Activated B cell treated with CpG ODN at 0.5 μM for 24 hours (primary cell): ENCODE measurements at regions of chr2 and their contacts with region 1.

Region 1: GRCh38 chr2:101151141-101151858 is at the start of gene TBC1D8:
- DNase-seq: peak; percentile 59
- ATAC-seq: peak; percentile 86
- H3K4me3 Mint-ChIP-seq: peak within 1 kb of the TSS; percentile 86
- H3K27ac Mint-ChIP-seq: no peak within 1 kb of the TSS
- H3K4me1 Mint-ChIP-seq: peaks cover 32% of the 10 kb centered on the region
- H3K27me3 Mint-ChIP-seq: peaks cover 31% of the 10 kb centered on the region
- CTCF ChIP-seq: no peak
- total RNA-seq, gene TBC1D8: 3.5 and 4.7 TPM in 2 replicates

Region 2: GRCh38 chr2:100610381-100610831 is 540.9 kb before region 1 on chr2:
- CTCF ChIA-PET with region 1: interaction called, 4 read pairs
- POLR2A ChIA-PET with region 1: no interaction called
- intact Hi-C with region 1: loop called (anchors 2 kb)
- DNase-seq: peak; percentile 25
- ATAC-seq: peak; percentile 58
- H3K4me3 Mint-ChIP-seq: no peak overlapping the region
- H3K27ac Mint-ChIP-seq: no peak overlapping the region
- H3K4me1 Mint-ChIP-seq: peaks cover 2% of the 10 kb centered on the region
- H3K27me3 Mint-ChIP-seq: peaks cover 24% of the 10 kb centered on the region
- CTCF ChIP-seq: no peak

Region 3: GRCh38 chr2:100818606-100819369 is 332.5 kb before region 1 on chr2:
- CTCF ChIA-PET with region 1: no interaction called
- POLR2A ChIA-PET with region 1: no interaction called
- intact Hi-C with region 1: no loop called
- DNase-seq: no peak
- ATAC-seq: no peak
- H3K4me3 Mint-ChIP-seq: no peak overlapping the region
- H3K27ac Mint-ChIP-seq: no peak overlapping the region
- H3K4me1 Mint-ChIP-seq: peaks cover 3% of the 10 kb centered on the region
- H3K27me3 Mint-ChIP-seq: peaks cover 58% of the 10 kb centered on the region
- CTCF ChIP-seq: no peak

Region 4: DNA sequence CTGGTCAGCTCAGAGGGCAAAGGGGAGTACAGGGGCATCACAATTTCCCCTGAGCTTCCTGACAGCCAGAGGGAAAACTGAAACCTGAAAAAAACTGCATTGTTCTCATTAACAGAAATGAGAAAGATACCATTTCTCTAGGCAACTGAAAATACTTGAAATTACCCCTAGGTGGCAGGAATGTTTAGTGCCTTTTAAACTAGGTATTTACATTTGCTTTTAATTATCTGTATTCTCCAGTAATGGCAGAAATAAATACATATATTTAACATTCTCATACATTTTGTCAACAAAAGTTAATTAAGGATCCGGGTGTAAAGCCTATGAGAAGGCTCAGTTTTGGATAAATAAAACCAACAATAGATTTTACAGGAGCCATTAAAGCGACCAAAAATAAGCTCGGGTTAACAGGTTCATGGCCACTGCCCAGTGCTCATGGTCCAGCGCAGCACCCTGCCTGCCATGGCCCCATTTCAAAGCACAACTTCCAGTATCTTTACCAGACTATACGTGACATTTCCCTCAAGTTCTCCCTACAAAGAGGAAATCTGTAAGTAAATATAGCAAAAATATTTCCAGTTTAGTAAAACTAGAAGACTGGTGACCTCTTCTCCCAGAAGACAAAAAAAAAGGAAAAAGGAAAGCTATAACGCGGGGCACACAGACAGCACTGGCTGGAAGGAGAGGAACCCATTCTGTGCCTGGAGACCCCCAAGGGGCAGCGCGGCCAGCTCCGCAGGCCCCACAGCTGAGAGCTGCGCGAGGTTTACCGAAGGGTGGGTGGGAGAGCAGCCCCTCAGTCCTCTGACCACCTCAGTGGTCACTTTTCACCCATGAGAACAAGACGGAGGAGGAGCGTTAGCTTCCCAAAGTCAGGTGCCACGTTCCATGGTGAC is 114.5 kb before region 1 on chr2:
- CTCF ChIA-PET with region 1: interaction called, 12 read pairs
- POLR2A ChIA-PET with region 1: no interaction called
- intact Hi-C with region 1: loop called (anchors 1 kb)
- DNase-seq: no peak
- ATAC-seq: no peak
- H3K4me3 Mint-ChIP-seq: no peak overlapping the region
- H3K27ac Mint-ChIP-seq: no peak overlapping the region
- H3K4me1 Mint-ChIP-seq: no peaks in the 10 kb centered on the region
- H3K27me3 Mint-ChIP-seq: peaks cover 7% of the 10 kb centered on the region
- CTCF ChIP-seq: peak; percentile 45

Region 5: DNA sequence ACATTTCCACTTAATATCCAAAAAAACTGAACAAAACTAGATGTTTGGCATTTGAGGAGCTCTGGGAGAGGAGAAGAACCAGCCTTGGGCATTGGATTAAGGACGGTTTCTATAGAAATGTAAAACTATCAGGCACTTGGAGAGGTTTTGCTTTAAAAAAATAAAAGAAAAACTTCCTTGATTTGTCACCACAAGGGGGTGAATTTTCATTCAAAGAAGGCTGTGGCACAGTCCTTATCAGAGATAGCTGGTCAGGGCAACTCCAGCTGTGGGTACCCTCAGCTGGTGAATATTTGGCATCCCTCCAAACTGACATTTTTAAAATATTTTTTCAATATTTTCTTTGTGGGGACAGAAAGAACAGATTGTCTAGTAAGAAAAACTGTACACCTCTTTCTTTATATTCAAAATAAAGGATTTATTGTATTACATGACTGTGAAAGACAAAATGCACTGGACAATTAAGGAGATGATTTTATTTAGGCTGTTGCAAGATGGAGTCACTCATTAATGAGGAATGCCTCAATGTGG is 46.0 kb after region 1 on chr2:
- CTCF ChIA-PET with region 1: interaction called, 8 read pairs
- POLR2A ChIA-PET with region 1: interaction called, 3 read pairs
- intact Hi-C with region 1: loop called (anchors 2 kb)
- DNase-seq: no peak
- ATAC-seq: no peak
- H3K4me3 Mint-ChIP-seq: no peak overlapping the region
- H3K27ac Mint-ChIP-seq: no peak overlapping the region
- H3K4me1 Mint-ChIP-seq: no peaks in the 10 kb centered on the region
- H3K27me3 Mint-ChIP-seq: peaks cover 10% of the 10 kb centered on the region
- CTCF ChIP-seq: no peak